Naive thymus-derived CD4-positive, alpha-beta T cell (primary cell): ENCODE measurements at regions of chr1 and their contacts with region 1.

Region 1: GRCh38 chr1:51878616-51879336 is at the start of gene NRDC:
- DNase-seq: peak; percentile 95 to 100 (median 99)
- ATAC-seq: peak; percentile 95
- H3K4me3 ChIP-seq: peak within 1 kb of the TSS; percentile 87
- H3K4me3 Mint-ChIP-seq: no peak within 1 kb of the TSS
- H3K27ac ChIP-seq: peak within 1 kb of the TSS; percentile 98
- H3K27ac Mint-ChIP-seq: no peak within 1 kb of the TSS
- H3K4me1 ChIP-seq: peaks cover 16 to 26% of the 10 kb centered on the region in 2 donors
- H3K4me1 Mint-ChIP-seq: peaks cover 0 to 30% (median 17%) of the 10 kb centered on the region in 7 donors
- H3K27me3 ChIP-seq: no peaks in the 10 kb centered on the region
- H3K27me3 Mint-ChIP-seq: peaks cover 7 to 15% (median 10%) of the 10 kb centered on the region in 5 donors
- total RNA-seq, gene NRDC: 93.1 to 194 (median 122) TPM

Region 2: DNA sequence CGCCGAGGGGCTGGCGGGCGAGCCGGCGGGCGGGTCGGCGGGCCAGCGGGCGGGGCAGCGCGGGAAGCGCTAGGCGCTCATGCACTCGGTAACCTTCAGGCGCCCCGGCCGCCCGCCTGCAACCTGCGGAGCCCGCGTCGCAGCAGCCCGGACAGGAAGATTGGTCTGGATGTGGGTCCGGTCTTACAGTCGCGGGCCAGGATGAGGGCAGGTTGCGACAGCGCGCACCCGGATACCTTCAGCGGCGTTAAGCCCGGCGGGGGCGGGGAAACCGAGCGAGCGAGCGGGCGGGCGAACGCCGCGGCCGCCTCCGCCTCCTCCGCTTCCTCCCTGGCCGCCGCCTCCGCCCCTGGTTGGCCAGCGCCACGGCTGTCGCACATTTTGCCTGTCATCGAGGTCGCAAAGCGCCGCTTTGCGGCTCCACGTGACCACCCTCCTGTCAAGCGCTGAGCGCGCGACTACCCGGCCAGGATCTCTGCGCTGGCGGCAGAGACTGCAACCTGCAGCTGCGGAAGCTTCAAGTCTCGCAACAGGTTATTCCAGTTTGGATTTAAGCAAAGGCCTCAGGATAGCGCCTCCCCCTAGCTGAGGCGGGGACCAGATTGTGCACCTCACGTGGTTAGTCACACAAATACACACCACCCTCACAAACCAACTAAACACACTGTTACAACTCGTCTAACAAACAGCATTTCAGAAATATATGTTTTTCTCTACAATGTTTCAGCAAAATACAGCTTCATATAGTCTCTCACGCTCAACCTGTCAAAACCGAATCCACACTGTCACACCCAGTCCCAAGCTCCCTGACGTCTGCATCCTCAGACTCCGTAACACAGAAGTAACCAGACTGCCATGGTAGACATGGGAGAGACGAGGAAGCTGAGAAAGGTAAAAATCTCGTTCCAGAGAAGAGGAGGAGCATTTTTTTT is 918.6 kb before region 1 on chr1 and contains the start of gene FAF1:
- CTCF ChIA-PET with region 1: no interaction called
- POLR2A ChIA-PET with region 1: no interaction called
- intact Hi-C with region 1: loop called (anchors 1 kb)
- DNase-seq: peak; percentile 94 to 98 (median 98)
- ATAC-seq: peak; percentile 98
- H3K4me3 ChIP-seq: peak within 1 kb of the TSS; percentile 61
- H3K4me3 Mint-ChIP-seq: peak within 1 kb of the TSS; percentile 82 to 98 (median 92)
- H3K27ac ChIP-seq: peak within 1 kb of the TSS; percentile 71
- H3K27ac Mint-ChIP-seq: peak within 1 kb of the TSS; percentile 64 to 97 (median 96)
- H3K4me1 ChIP-seq: peaks cover 7% of the 10 kb centered on the region in 2 donors
- H3K4me1 Mint-ChIP-seq: peaks cover 14 to 35% (median 24%) of the 10 kb centered on the region in 7 donors
- H3K27me3 ChIP-seq: no peaks in the 10 kb centered on the region
- H3K27me3 Mint-ChIP-seq: peaks cover 0 to 9% (median 0%) of the 10 kb centered on the region in 5 donors
- total RNA-seq, gene FAF1: 46.4 to 66.6 (median 52.5) TPM

Region 3: GRCh38 chr1:51235673-51236530 is 642.9 kb before region 1 on chr1 and contains the start of gene RNF11:
- CTCF ChIA-PET with region 1: no interaction called
- POLR2A ChIA-PET with region 1: no interaction called
- intact Hi-C with region 1: loop called (anchors 1 to 2 kb)
- DNase-seq: peak; percentile 89 to 97 (median 93)
- ATAC-seq: peak; percentile 98
- H3K4me3 ChIP-seq: peak within 1 kb of the TSS; percentile 68
- H3K4me3 Mint-ChIP-seq: peak within 1 kb of the TSS in 9 of 10 donors; percentile 90 to 99 (median 94)
- H3K27ac ChIP-seq: peak within 1 kb of the TSS; percentile 90
- H3K27ac Mint-ChIP-seq: peak within 1 kb of the TSS; percentile 91 to 100 (median 96)
- H3K4me1 ChIP-seq: peaks cover 18 to 34% of the 10 kb centered on the region in 2 donors
- H3K4me1 Mint-ChIP-seq: peaks cover 15 to 36% (median 30%) of the 10 kb centered on the region in 7 donors
- H3K27me3 ChIP-seq: no peaks in the 10 kb centered on the region
- H3K27me3 Mint-ChIP-seq: peaks cover 0 to 4% (median 0%) of the 10 kb centered on the region in 5 donors
- total RNA-seq, gene RNF11: 23.3 to 64.0 (median 42.9) TPM

Region 4: DNA sequence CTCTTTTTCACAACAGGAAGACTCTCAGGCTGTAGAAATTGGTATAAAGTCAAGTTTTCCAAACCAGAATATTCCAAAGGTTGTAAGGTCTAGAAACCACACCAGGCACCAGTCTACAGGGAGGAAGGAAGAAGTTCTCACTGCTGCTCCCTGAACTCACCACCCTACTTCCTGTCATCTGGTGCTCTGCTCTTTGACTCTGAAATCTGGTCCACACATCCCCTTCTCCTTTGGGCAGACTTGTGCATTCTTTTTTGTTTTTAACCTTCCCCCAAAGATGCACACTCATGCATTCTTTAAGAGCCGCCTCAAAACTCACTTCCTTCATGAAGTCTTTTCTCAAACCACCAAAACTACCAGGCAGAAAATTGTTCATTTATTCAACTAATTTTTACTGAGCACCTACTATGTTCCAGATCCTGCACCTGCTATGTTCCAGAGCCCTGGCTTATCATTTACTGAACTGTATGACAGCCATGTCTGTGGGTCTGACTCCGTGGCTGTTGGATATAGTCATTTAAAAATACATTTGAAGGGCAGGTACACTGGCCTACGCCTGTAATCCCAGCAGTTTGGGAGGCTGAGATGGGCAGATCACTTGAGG is 329.7 kb before region 1 on chr1:
- CTCF ChIA-PET with region 1: no interaction called
- POLR2A ChIA-PET with region 1: no interaction called
- intact Hi-C with region 1: no loop called
- DNase-seq: peak in 2 of 9 donors; percentile 6 to 14
- ATAC-seq: peak; percentile 56
- H3K4me3 ChIP-seq: no peak overlapping the region
- H3K4me3 Mint-ChIP-seq: peak overlapping the region in 2 of 10 donors; percentile 8 to 9
- H3K27ac ChIP-seq: peak overlapping the region; percentile 25
- H3K27ac Mint-ChIP-seq: peak overlapping the region in 8 of 9 donors; percentile 11 to 85 (median 72)
- H3K4me1 ChIP-seq: peaks cover 5 to 8% of the 10 kb centered on the region in 2 donors
- H3K4me1 Mint-ChIP-seq: peaks cover 12 to 18% (median 14%) of the 10 kb centered on the region in 7 donors
- H3K27me3 ChIP-seq: no peaks in the 10 kb centered on the region
- H3K27me3 Mint-ChIP-seq: no peaks in the 10 kb centered on the region

Region 5: GRCh38 chr1:51616901-51617708 is 261.7 kb before region 1 on chr1 and contains the start of gene OSBPL9:
- CTCF ChIA-PET with region 1: no interaction called
- POLR2A ChIA-PET with region 1: no interaction called
- intact Hi-C with region 1: loop called (anchors 1 to 2 kb)
- DNase-seq: peak; percentile 69 to 89 (median 84)
- ATAC-seq: peak; percentile 98
- H3K4me3 ChIP-seq: peak within 1 kb of the TSS; percentile 95
- H3K4me3 Mint-ChIP-seq: peak within 1 kb of the TSS; percentile 98 to 100 (median 99)
- H3K27ac ChIP-seq: peak within 1 kb of the TSS; percentile 86
- H3K27ac Mint-ChIP-seq: peak within 1 kb of the TSS; percentile 94 to 100 (median 99)
- H3K4me1 ChIP-seq: peaks cover 6 to 15% of the 10 kb centered on the region in 2 donors
- H3K4me1 Mint-ChIP-seq: peaks cover 22 to 60% (median 48%) of the 10 kb centered on the region in 7 donors
- H3K27me3 ChIP-seq: no peaks in the 10 kb centered on the region
- H3K27me3 Mint-ChIP-seq: peaks cover 0 to 6% (median 3%) of the 10 kb centered on the region in 5 donors
- total RNA-seq, gene OSBPL9: 44.5 to 56.9 (median 46.6) TPM

Region 6: DNA sequence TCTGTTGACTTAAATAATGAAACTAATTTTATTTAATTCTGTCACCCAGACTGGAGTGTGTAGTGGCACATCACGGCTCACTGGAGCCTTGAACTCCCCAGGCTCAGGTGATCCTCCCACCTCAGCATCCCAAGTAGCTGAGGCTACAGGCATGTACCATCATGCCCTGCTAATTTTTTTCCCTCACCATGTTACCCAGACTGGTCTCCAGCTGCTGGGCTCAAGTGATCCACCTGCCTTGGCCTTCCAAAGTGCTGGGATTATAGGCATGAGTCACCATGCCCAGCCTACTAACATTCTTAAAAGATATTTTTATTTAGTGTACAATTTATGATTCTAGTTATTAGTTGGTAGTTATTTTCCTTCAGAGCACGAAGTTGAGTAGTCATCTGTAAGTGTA is 49.7 kb before region 1 on chr1:
- CTCF ChIA-PET with region 1: no interaction called
- POLR2A ChIA-PET with region 1: interaction called, 4 read pairs
- intact Hi-C with region 1: loop called in 1 of 2 experiments (anchors 2 kb)
- DNase-seq: no peak
- ATAC-seq: no peak
- H3K4me3 ChIP-seq: no peak overlapping the region
- H3K4me3 Mint-ChIP-seq: no peak overlapping the region
- H3K27ac ChIP-seq: no peak overlapping the region
- H3K27ac Mint-ChIP-seq: no peak overlapping the region
- H3K4me1 ChIP-seq: no peaks in the 10 kb centered on the region
- H3K4me1 Mint-ChIP-seq: peaks cover 0 to 1% (median 0%) of the 10 kb centered on the region in 7 donors
- H3K27me3 ChIP-seq: no peaks in the 10 kb centered on the region
- H3K27me3 Mint-ChIP-seq: no peaks in the 10 kb centered on the region

Region 7: GRCh38 chr1:51916587-51917405 is 38.0 kb after region 1 on chr1:
- CTCF ChIA-PET with region 1: no interaction called
- POLR2A ChIA-PET with region 1: no interaction called
- intact Hi-C with region 1: no loop called
- DNase-seq: no peak
- ATAC-seq: no peak
- H3K4me3 ChIP-seq: no peak overlapping the region
- H3K4me3 Mint-ChIP-seq: no peak overlapping the region
- H3K27ac ChIP-seq: no peak overlapping the region
- H3K27ac Mint-ChIP-seq: no peak overlapping the region
- H3K4me1 ChIP-seq: no peaks in the 10 kb centered on the region
- H3K4me1 Mint-ChIP-seq: no peaks in the 10 kb centered on the region
- H3K27me3 ChIP-seq: no peaks in the 10 kb centered on the region
- H3K27me3 Mint-ChIP-seq: peaks cover 4 to 27% (median 13%) of the 10 kb centered on the region in 5 donors

Region 8: GRCh38 chr1:52179085-52179484 is 300.3 kb after region 1 on chr1:
- CTCF ChIA-PET with region 1: no interaction called
- POLR2A ChIA-PET with region 1: no interaction called
- intact Hi-C with region 1: no loop called
- DNase-seq: no peak
- ATAC-seq: no peak
- H3K4me3 ChIP-seq: no peak overlapping the region
- H3K4me3 Mint-ChIP-seq: no peak overlapping the region
- H3K27ac ChIP-seq: no peak overlapping the region
- H3K27ac Mint-ChIP-seq: no peak overlapping the region
- H3K4me1 ChIP-seq: no peaks in the 10 kb centered on the region
- H3K4me1 Mint-ChIP-seq: peaks cover 0 to 20% (median 0%) of the 10 kb centered on the region in 7 donors
- H3K27me3 ChIP-seq: no peaks in the 10 kb centered on the region
- H3K27me3 Mint-ChIP-seq: no peaks in the 10 kb centered on the region

Region 9: GRCh38 chr1:52726265-52727113 is 847.7 kb after region 1 on chr1 and contains the start of gene ZYG11B:
- CTCF ChIA-PET with region 1: no interaction called
- POLR2A ChIA-PET with region 1: no interaction called
- intact Hi-C with region 1: loop called in 1 of 2 experiments (anchors 5 kb)
- DNase-seq: peak; percentile 80 to 93 (median 88)
- ATAC-seq: peak; percentile 97
- H3K4me3 ChIP-seq: peak within 1 kb of the TSS; percentile 85
- H3K4me3 Mint-ChIP-seq: peak within 1 kb of the TSS; percentile 88 to 99 (median 97)
- H3K27ac ChIP-seq: peak within 1 kb of the TSS; percentile 89
- H3K27ac Mint-ChIP-seq: peak within 1 kb of the TSS; percentile 72 to 97 (median 90)
- H3K4me1 ChIP-seq: peaks cover 12 to 19% of the 10 kb centered on the region in 2 donors
- H3K4me1 Mint-ChIP-seq: peaks cover 24 to 60% (median 54%) of the 10 kb centered on the region in 7 donors
- H3K27me3 ChIP-seq: no peaks in the 10 kb centered on the region
- H3K27me3 Mint-ChIP-seq: peaks cover 0 to 6% (median 0%) of the 10 kb centered on the region in 5 donors
- total RNA-seq, gene ZYG11B: 14.9 to 26.8 (median 17.9) TPM

Region 10: DNA sequence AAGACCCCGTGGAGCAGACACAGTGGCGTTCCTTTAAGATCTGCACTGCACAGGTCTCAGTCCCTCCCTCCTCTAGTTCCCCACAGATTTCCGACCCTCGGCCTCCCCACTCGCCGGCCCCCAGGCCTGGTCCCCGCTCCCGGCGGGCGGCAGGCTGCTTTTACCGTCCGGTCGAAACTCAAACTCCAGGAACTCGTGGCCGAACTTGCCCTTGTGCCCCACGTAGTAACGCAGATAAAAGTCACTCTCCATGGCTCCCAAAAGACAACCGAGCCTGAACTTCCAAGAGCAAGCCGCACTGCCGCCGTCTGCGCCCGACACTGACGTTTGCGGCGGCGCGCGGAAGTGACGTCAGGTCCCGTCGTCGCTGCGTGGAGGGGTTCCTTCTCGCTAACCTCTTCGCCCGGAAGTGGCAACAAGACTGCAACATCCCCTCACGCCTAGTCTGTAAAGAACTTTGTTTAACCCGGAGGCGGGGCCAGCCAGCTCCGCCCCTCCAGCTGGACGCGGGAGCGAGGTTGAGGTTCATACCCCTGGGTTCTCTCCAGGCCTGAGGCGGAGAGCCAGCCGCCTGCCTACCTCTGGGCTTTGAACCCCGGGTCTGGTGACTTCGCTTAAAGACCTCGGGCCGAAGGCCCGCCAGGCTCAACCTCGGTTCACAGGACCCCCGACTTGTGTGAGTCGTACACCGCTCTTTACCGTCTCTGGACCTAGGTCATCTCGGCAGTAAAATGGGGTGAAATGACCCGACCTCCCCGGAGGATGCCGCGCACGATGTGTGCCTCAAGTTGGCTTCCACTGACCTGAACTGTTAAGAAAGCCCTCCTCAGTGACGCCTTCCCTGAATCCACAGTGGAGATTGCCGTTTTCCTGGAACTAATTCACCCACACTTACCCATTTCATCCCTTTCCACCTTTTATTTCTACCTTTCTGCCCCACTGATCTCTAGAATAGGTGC is 1359.7 kb after region 1 on chr1 and contains the start of gene MAGOH:
- CTCF ChIA-PET with region 1: no interaction called
- POLR2A ChIA-PET with region 1: no interaction called
- intact Hi-C with region 1: loop called in 1 of 2 experiments (anchors 1 kb)
- DNase-seq: peak; percentile 90 to 96 (median 95)
- ATAC-seq: peak; percentile 98
- H3K4me3 ChIP-seq: peak within 1 kb of the TSS; percentile 97
- H3K4me3 Mint-ChIP-seq: peak within 1 kb of the TSS; percentile 96 to 99 (median 98)
- H3K27ac ChIP-seq: peak within 1 kb of the TSS; percentile 94
- H3K27ac Mint-ChIP-seq: peak within 1 kb of the TSS; percentile 92 to 99 (median 98)
- H3K4me1 ChIP-seq: peaks cover 18 to 19% of the 10 kb centered on the region in 2 donors
- H3K4me1 Mint-ChIP-seq: peaks cover 18 to 47% (median 32%) of the 10 kb centered on the region in 7 donors
- H3K27me3 ChIP-seq: no peaks in the 10 kb centered on the region
- H3K27me3 Mint-ChIP-seq: peaks cover 0 to 2% (median 0%) of the 10 kb centered on the region in 5 donors
- total RNA-seq, gene MAGOH: 37.7 to 76.7 (median 52.3) TPM